ENCODE measurements at regions of chr19 and their contacts with region 1.

Region 1: DNA sequence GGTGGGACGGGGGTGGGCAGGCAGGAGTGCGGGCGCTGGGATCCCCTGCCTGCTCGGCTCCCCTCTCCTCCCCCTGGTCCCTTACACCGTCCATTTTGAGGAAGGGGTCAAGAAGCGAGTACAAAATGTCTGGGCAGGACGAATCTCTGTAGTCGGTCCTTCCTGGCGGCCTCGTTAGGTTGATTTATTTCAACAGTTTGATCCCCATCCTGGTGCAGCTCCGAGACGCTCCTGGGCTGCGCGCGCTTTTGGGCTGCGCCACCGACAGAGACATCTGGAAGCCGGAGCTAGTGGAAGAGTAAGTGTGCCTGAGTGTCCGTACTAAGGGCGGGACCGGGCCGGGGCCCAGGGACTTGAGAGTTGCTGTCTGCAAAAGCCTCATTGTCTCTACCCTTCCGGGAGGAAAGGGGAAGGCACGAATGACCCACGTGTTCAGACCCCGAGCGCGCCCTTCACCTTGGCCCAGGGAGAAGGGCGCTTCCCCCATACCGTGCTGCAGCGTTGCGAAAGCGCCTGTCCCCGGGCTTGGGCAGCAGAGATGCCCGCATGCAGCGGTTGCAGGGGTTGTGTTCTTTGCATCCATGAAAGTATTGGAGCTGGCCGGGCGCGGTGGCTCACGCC is 1.8 kb downstream of the ZNF114 start:
- DNase-seq: no peak
- H3K4me3 ChIP-seq: peak overlapping the region; percentile 47 to 61
- H3K27ac ChIP-seq: peak overlapping the region; percentile 48
- H3K4me1 ChIP-seq: peaks cover 18% of the 10 kb centered on the region
- H3K27me3 ChIP-seq: no peaks in the 10 kb centered on the region
- CTCF ChIP-seq: peak in 1 of 3 experiments; percentile 6
- POLR2A ChIP-seq: no peak

Region 2: GRCh38 chr19:48308631-48309586 is 37.3 kb after region 1 on chr19:
- intact Hi-C with region 1: loop called (anchors 1 kb)
- DNase-seq: no peak
- H3K4me3 ChIP-seq: no peak overlapping the region
- H3K27ac ChIP-seq: no peak overlapping the region
- H3K4me1 ChIP-seq: peaks cover 15% of the 10 kb centered on the region
- H3K27me3 ChIP-seq: no peaks in the 10 kb centered on the region
- CTCF ChIP-seq: no peak
- POLR2A ChIP-seq: no peak

Region 3: GRCh38 chr19:48489608-48490216 is 218.1 kb after region 1 on chr19:
- intact Hi-C with region 1: no loop called
- DNase-seq: no peak
- H3K4me3 ChIP-seq: no peak overlapping the region
- H3K27ac ChIP-seq: no peak overlapping the region
- H3K4me1 ChIP-seq: peaks cover 50% of the 10 kb centered on the region
- H3K27me3 ChIP-seq: no peaks in the 10 kb centered on the region
- CTCF ChIP-seq: peak; percentile 82 to 92 (median 84)
- POLR2A ChIP-seq: no peak

Region 4: DNA sequence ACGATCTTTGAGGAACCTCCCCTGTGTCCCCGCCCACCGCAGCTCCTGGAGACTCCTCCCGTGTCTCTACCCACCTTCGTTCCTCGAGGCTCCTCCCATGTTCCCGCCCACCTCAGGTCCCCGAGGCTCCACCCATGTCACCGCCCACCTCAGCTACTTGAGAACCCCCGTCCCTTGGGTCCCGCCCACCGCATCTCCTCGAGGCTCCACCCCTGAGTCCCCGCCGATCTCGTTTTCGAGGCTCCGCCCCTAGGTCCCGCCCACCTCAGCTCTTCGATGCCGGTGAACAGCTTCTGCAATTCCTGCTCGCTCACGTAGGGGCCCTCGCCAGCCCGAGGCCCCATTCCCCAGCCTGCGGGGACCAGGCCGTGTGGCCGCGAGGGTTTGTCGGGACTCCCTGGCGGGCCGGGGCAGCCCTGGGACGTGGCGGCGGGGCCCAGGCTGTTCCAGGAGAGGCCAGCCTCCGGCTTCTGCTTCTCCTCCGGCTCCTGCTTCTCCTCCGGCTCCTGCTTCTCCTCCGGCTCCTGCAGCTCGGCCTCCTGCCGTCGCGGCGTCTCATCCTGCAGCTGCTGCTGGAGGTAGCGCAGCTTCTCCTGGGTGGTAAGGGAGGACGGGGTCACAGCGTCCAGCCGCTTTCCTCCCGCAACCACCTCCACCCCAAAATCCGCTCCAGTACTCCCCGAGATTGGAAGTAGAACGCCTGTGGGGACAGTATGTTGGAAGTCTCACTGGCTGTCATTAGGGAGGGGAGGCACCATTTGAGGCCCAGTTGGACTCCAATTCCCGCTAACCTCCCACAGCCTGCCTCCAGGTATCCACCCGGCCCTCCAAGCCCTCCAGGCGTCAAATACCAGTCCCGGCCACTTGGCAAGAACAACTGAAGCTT is 1474.8 kb after region 1 on chr19:
- intact Hi-C with region 1: no loop called
- DNase-seq: no peak
- H3K4me3 ChIP-seq: no peak overlapping the region
- H3K27ac ChIP-seq: no peak overlapping the region
- H3K4me1 ChIP-seq: no peaks in the 10 kb centered on the region
- H3K27me3 ChIP-seq: no peaks in the 10 kb centered on the region
- CTCF ChIP-seq: no peak
- POLR2A ChIP-seq: no peak

Measured in vagina (tissue), 2 donors.